ENCODE measurements at regions of chr17 and their contacts with region 1.

Region 1: GRCh38 chr17:45719335-45720071 is 64.6 kb upstream of the CRHR1 start:
- DNase-seq: peak; percentile 39
- ATAC-seq: peak; percentile 75
- H3K4me3 Mint-ChIP-seq: no peak overlapping the region
- H3K27ac Mint-ChIP-seq: no peak overlapping the region
- H3K4me1 Mint-ChIP-seq: peaks cover 15% of the 10 kb centered on the region
- H3K27me3 Mint-ChIP-seq: peaks cover 10% of the 10 kb centered on the region
- CTCF ChIP-seq: no peak; the same call in 1 of the 2 replicates

Region 2: GRCh38 chr17:45317112-45317928 is 402.2 kb before region 1 on chr17:
- CTCF ChIA-PET with region 1: no interaction called
- POLR2A ChIA-PET with region 1: no interaction called
- DNase-seq: peak; percentile 100
- ATAC-seq: peak; percentile 92
- H3K4me3 Mint-ChIP-seq: peak overlapping the region; percentile 85
- H3K27ac Mint-ChIP-seq: peak overlapping the region; percentile 90
- H3K4me1 Mint-ChIP-seq: peaks cover 22% of the 10 kb centered on the region
- H3K27me3 Mint-ChIP-seq: peaks cover 37% of the 10 kb centered on the region
- CTCF ChIP-seq: no peak

Region 3: GRCh38 chr17:45648642-45649041 is 70.9 kb before region 1 on chr17:
- CTCF ChIA-PET with region 1: interaction called, 31 read pairs
- POLR2A ChIA-PET with region 1: no interaction called
- DNase-seq: peak; percentile 80
- ATAC-seq: peak; percentile 85
- H3K4me3 Mint-ChIP-seq: no peak overlapping the region
- H3K27ac Mint-ChIP-seq: no peak overlapping the region
- H3K4me1 Mint-ChIP-seq: peaks cover 16% of the 10 kb centered on the region
- H3K27me3 Mint-ChIP-seq: no peaks in the 10 kb centered on the region
- CTCF ChIP-seq: peak; percentile 70

Region 4: GRCh38 chr17:45745601-45746494 is 26.3 kb after region 1 on chr17:
- CTCF ChIA-PET with region 1: interaction called, 15 read pairs
- POLR2A ChIA-PET with region 1: no interaction called
- DNase-seq: no peak
- ATAC-seq: peak; percentile 68
- H3K4me3 Mint-ChIP-seq: no peak overlapping the region
- H3K27ac Mint-ChIP-seq: no peak overlapping the region
- H3K4me1 Mint-ChIP-seq: peaks cover 8% of the 10 kb centered on the region
- H3K27me3 Mint-ChIP-seq: peaks cover 95% of the 10 kb centered on the region
- CTCF ChIP-seq: no peak

Region 5: DNA sequence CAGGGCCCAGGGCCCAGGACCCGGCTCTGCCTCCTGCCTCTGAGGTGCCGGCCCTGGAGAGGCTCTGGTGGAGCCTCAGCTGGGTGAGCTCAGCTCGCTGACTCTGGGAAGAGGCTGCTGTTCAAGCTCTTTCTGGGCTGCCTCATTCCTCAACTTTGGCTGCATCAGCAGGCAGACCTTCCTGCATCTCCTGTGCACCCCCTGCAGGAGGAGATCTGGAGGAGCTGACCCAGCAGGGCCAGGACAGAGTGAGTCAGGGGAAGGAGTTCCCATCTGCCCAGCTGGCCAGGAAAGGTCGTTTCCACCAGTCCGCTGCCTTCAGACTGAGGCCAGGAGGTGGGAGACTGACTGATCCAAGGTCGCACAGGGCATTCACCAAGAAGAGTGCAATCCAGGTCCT is 75.3 kb after region 1 on chr17:
- CTCF ChIA-PET with region 1: interaction called, 15 read pairs
- POLR2A ChIA-PET with region 1: no interaction called
- DNase-seq: peak; percentile 56
- ATAC-seq: peak; percentile 81
- H3K4me3 Mint-ChIP-seq: no peak overlapping the region
- H3K27ac Mint-ChIP-seq: no peak overlapping the region
- H3K4me1 Mint-ChIP-seq: peaks cover 29% of the 10 kb centered on the region
- H3K27me3 Mint-ChIP-seq: peaks cover 2% of the 10 kb centered on the region; the same call in 1 of the 2 replicates
- CTCF ChIP-seq: no peak

Region 6: DNA sequence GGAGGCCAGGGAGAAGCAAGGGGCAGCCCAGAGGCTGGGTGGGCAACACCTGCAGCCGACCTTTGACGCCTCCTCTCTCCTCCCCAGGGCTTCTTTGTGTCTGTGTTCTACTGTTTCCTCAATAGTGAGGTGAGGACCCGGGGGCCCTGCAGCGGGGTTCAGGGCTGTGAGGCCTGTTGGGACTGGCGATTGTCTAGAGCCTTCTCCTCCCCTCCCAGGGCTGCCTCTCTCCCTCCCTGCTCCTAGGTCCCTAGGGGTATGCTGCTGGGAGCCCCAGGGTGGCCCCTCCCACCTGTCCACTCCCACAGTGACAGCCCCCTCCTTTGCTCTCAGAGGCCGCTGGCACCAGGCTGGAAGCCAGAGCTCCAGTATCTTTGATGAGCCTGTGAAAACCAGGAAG is 114.4 kb after region 1 on chr17:
- CTCF ChIA-PET with region 1: interaction called, 37 read pairs
- POLR2A ChIA-PET with region 1: no interaction called
- DNase-seq: no peak
- ATAC-seq: no peak
- H3K4me3 Mint-ChIP-seq: no peak overlapping the region
- H3K27ac Mint-ChIP-seq: no peak overlapping the region
- H3K4me1 Mint-ChIP-seq: 0 out of 2 replicates have a peak, but pooled peaks cover 5% of the 10 kb centered on the region
- H3K27me3 Mint-ChIP-seq: no peaks in the 10 kb centered on the region
- CTCF ChIP-seq: no peak

Region 7: DNA sequence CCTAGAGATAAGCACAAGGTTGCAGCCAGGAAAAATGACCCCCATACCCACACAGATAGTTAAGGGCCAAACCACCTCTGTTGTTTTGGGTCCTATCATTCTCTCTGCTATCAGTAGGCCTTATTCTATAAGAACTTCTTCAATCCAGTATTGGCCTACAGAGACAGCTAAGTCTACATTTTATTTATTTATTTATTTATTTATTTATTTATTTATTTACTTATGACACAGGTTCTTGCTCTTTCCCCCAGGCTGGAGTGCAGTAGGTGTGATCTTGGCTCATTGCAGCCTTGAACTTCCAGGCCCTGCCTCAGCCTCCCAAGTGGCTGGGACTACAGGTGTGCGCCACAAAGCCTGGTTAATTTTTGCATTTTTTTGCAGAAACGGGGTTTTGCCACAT is 167.3 kb after region 1 on chr17:
- CTCF ChIA-PET with region 1: no interaction called
- POLR2A ChIA-PET with region 1: no interaction called
- DNase-seq: no peak
- ATAC-seq: no peak
- H3K4me3 Mint-ChIP-seq: no peak overlapping the region
- H3K27ac Mint-ChIP-seq: no peak overlapping the region
- H3K4me1 Mint-ChIP-seq: no peaks in the 10 kb centered on the region
- H3K27me3 Mint-ChIP-seq: peaks cover 22% of the 10 kb centered on the region
- CTCF ChIP-seq: no peak

Measured in WTC11 (cell line).